ENCODE measurements at regions of chr2 and their contacts with region 1.

Region 1: GRCh38 chr2:38581193-38582147 is 21.3 kb downstream of the HNRNPLL start:
- DNase-seq: peak; percentile 74
- H3K4me3 ChIP-seq: no peak overlapping the region
- H3K27ac ChIP-seq: no peak overlapping the region
- H3K4me1 ChIP-seq: no peaks in the 10 kb centered on the region
- H3K27me3 ChIP-seq: no peaks in the 10 kb centered on the region
- CTCF ChIP-seq: peak; percentile 49 to 53
- POLR2A ChIP-seq: no peak

Region 2: DNA sequence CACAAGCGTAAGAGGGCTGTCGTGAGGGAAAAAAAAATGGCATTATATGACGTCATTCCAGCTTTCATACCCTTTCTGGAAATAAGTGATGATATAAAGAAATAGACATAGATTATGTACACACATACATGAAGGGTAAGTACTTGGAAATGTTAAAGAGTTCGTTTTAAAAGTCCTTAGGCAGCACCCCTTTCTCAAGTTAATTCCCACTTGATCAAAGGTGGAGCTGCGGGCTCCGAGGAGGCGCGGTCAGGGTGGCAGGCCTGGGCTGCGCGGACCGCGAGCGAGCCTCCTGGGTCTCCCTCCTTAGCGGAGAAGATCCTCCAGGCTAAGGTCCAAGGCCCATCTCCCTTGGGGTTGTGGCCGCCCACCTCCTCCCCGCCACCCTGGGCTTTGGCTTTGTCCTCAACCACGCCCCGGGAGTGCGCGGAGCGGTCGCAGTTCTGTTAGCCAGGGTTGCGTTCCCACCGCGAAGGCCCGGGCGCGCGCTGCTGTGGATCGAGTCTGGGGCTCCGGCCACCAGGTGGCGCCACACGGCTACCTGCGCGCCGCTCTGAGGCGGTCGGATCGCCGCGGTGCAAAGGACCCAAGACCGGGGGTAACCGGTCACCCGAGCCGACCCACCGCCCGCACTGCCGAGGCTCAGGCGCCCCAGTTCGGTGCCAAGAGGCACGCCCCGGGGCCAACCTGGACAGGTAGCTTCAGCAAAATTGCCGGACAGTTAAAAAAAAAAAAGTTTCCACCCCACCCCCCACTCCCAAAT is 45.5 kb before region 1 on chr2:
- CTCF ChIA-PET with region 1: interaction called, 23 read pairs
- POLR2A ChIA-PET with region 1: no interaction called
- dilution Hi-C with region 1: no loop called
- intact Hi-C with region 1: no loop called
- DNase-seq: peak; percentile 75
- H3K4me3 ChIP-seq: peak overlapping the region; percentile 34 to 57 (median 52)
- H3K27ac ChIP-seq: no peak overlapping the region
- H3K4me1 ChIP-seq: no peaks in the 10 kb centered on the region
- H3K27me3 ChIP-seq: no peaks in the 10 kb centered on the region
- CTCF ChIP-seq: peak; percentile 94 to 96
- POLR2A ChIP-seq: no peak

Region 3: DNA sequence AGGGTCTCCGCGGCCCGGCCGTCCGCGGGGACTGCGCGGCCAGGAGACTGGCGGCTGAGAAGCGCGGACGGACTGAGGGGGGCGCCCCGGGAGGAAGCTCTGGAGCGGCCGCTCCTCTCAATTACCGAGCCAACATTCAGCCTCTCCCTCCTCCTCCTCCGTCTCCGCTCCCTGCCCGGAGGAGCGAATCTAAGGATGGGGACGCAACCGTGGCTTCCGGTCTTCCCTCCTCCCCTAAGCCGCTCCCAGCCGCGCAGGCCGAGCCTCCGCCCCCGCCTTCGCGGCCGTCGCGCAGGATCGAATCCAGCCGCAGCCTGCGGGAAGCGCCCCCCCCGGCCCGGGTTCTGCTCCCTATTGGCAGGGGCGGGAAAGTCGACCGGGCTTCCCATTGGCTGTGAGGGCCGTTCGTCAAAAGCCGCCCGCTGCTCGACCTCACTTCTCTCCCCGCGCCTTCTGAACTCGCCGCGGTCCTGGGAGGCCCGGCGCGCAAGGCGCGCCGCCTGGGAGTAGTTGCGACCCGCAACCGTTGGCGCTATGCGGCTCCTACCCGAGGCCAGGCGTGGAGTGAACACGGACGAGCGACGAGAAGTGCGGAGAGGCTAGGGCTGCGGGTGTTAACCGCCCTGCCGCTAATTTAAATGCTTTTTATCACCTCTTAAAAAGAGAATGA is 21.4 kb after region 1 on chr2 and contains the start of gene HNRNPLL:
- CTCF ChIA-PET with region 1: interaction called, 69 read pairs
- POLR2A ChIA-PET with region 1: interaction called, 3 read pairs
- dilution Hi-C with region 1: no loop called
- intact Hi-C with region 1: loop called (anchors 2 kb)
- DNase-seq: peak; percentile 98
- H3K4me3 ChIP-seq: peak within 1 kb of the TSS; percentile 95 to 99 (median 98)
- H3K27ac ChIP-seq: peak within 1 kb of the TSS; percentile 62
- H3K4me1 ChIP-seq: peaks cover 23% of the 10 kb centered on the region
- H3K27me3 ChIP-seq: no peaks in the 10 kb centered on the region
- CTCF ChIP-seq: no peak
- POLR2A ChIP-seq: peak; percentile 97
- total RNA-seq, gene HNRNPLL: 56.2 and 61.1 TPM in 2 replicates

Region 4: GRCh38 chr2:38720613-38721241 is 139.3 kb after region 1 on chr2:
- CTCF ChIA-PET with region 1: interaction called, 58 read pairs
- POLR2A ChIA-PET with region 1: no interaction called
- dilution Hi-C with region 1: no loop called
- intact Hi-C with region 1: no loop called
- DNase-seq: peak; percentile 18
- H3K4me3 ChIP-seq: no peak overlapping the region
- H3K27ac ChIP-seq: no peak overlapping the region
- H3K4me1 ChIP-seq: no peaks in the 10 kb centered on the region
- H3K27me3 ChIP-seq: no peaks in the 10 kb centered on the region
- CTCF ChIP-seq: no peak
- POLR2A ChIP-seq: no peak

Region 5: DNA sequence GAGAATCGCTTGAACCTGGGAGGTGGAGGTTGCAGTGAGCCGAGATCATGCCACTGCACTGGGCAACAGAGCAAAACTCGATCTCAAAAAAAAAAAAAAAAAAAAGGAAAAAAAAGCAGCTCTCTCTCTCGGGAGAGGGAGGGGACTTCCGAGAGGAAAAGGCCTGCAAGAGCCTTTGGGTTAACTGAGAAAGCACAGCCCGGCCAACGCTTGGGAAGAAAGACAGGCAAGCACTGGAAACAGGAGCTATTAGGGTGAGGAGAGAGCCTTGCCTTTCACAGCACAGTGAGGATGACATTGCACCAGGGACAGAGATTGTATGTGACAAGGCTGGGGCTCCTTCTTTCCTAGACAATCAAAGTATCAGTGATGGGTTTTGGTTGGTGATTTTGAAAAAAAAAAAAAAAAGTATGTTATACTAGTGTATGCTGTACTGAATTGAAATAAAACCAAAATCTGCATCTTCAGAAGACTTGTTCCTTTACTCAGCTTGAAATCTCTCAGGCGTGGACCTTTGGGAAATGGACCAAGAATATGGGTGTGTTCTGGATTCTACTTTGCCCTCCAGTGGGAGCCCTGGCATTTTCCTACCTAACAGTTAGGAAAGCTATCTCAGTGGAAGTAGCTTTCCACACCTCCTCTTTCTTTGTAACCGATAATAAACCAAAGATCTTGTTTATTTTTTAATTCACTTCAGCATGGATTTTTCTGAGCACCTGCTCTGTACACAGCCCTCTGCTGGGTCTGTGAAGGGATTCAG is 153.0 kb after region 1 on chr2:
- CTCF ChIA-PET with region 1: interaction called, 40 read pairs
- POLR2A ChIA-PET with region 1: no interaction called
- dilution Hi-C with region 1: no loop called
- intact Hi-C with region 1: no loop called
- DNase-seq: no peak
- H3K4me3 ChIP-seq: no peak overlapping the region
- H3K27ac ChIP-seq: no peak overlapping the region
- H3K4me1 ChIP-seq: no peaks in the 10 kb centered on the region
- H3K27me3 ChIP-seq: no peaks in the 10 kb centered on the region
- CTCF ChIP-seq: no peak
- POLR2A ChIP-seq: no peak

Region 6: GRCh38 chr2:38835015-38835601 is 253.6 kb after region 1 on chr2:
- CTCF ChIA-PET with region 1: interaction called, 10 read pairs
- POLR2A ChIA-PET with region 1: no interaction called
- dilution Hi-C with region 1: no loop called
- intact Hi-C with region 1: loop called (anchors 1 kb)
- DNase-seq: peak; percentile 40
- H3K4me3 ChIP-seq: no peak overlapping the region
- H3K27ac ChIP-seq: no peak overlapping the region
- H3K4me1 ChIP-seq: no peaks in the 10 kb centered on the region
- H3K27me3 ChIP-seq: no peaks in the 10 kb centered on the region
- CTCF ChIP-seq: peak; percentile 17 to 35
- POLR2A ChIP-seq: no peak

Measured in endothelial cell of umbilical vein (primary cell).